ENCODE measurements at regions of chr1 and their contacts with region 1.

Region 1: GRCh38 chr1:51898071-51898734 is 19.7 kb upstream of the NRDC start:
- DNase-seq: no peak
- H3K4me3 ChIP-seq: no peak overlapping the region
- H3K27ac ChIP-seq: peak overlapping the region; percentile 36; the same call in 1 of the 2 replicates
- H3K4me1 ChIP-seq: peaks cover 22% of the 10 kb centered on the region
- H3K27me3 ChIP-seq: no peaks in the 10 kb centered on the region
- CTCF ChIP-seq: no peak

Region 2: DNA sequence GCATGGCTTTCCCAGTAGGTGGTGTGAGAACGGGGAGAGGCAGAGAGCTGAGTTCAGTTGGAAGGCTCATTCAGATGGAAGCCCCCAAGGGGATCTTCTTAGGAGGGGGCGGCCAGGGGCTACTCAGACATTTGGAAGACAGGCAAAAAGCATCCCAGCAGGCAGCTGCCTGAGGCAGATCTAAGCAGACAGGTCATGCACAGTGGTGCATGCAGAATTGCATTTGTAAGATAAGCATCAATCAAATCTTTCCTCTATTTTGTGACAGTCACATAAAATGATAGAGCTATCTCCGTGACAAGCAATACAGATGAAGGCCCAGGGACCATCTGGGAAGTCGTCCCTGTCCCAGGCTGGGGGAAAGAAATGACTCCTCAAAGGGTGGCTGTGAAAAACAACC is 88.5 kb after region 1 on chr1:
- CTCF ChIA-PET with region 1: interaction called, 17 read pairs
- POLR2A ChIA-PET with region 1: interaction called, 9 read pairs
- intact Hi-C with region 1: no loop called
- DNase-seq: no peak
- H3K4me3 ChIP-seq: no peak overlapping the region
- H3K27ac ChIP-seq: no peak overlapping the region
- H3K4me1 ChIP-seq: no peaks in the 10 kb centered on the region
- H3K27me3 ChIP-seq: no peaks in the 10 kb centered on the region
- CTCF ChIP-seq: no peak

Region 3: DNA sequence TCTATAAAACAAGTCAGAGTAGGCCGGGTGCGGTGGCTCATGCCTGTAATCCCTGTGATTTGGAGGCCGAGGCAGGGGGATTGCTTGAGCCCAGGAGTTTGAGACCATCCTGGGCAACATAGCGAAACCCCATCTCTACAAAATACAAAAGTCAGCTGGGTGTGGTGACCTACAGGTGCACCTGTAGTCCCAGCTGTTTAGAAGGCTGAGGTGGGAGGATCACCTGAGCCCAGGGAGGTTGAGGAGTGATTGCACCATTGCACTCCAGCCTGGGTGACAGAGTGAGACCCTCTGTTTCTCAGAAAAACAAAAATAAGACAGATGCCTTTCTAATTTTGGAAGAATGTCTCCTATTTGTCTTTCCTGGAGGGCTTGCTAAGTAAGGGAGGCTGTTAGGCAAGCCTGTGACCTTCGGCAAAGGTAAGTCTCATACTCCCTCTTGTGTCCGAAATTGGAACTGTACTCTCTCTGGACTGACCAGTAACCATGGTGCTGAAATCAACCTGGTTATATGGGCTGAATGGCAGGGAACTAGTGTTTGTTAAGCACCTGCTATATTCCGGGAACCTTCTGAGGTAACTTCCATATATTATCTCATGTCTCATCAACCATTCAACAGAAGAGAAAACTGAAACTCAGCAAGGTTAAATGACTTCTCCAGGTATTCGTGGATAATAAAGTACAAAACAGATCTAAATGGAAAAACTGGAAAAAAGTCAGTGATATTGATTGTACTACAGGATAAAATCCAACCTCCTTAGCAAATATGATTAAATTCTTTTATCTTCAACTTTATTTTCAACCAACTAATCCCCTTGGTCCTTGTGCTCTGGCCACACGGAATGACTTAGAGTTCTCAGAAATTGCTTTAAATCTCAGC is 104.1 kb after region 1 on chr1:
- CTCF ChIA-PET with region 1: no interaction called
- POLR2A ChIA-PET with region 1: no interaction called
- intact Hi-C with region 1: loop called (anchors 1 kb)
- DNase-seq: peak; percentile 67
- H3K4me3 ChIP-seq: no peak overlapping the region
- H3K27ac ChIP-seq: no peak overlapping the region
- H3K4me1 ChIP-seq: no peaks in the 10 kb centered on the region
- H3K27me3 ChIP-seq: no peaks in the 10 kb centered on the region
- CTCF ChIP-seq: peak; percentile 94

Region 4: DNA sequence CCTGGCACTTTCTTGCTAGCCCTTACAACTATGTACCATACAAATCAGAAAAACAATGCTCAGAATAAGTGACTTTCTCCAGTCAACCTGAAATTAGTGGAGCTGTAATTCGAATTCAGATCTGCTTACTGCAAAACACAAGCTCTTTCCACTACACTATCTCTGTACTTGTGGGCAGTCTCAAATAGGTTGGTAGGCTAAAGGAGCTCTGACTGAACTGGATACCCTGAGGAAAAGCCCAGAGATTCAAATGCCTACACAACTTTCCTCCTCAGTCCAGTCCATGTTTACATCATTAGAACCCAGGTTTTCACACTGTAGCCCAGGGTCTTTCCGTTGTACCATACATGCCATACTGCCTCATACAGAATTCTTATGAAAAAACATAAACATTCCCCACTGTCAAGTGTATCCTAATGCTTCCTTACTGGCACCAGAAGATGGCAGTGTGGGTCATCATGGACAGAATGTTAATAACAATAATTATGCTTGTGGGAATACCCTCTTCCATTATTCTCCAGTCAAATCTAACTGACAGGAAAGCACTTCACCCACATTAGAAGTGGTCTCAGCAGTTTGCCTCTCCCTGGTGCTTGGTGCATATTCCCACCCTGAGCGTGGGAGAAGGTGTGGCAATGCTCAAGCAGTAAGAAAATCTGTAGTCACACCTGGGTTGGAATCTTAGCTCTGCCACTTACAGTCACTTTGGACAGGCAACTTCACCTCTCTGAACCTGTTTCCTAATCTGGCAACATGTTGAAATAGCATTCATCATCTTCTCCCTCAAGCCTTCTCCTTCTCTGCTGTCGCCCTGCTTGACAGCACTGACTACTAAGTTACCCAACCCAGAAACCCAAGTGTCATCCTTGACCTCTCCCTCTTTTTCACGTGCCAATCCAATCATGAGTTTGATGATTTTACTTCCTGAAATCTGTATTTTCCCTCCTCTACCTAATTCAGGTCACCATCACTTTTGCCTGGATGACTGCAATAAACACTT is 229.3 kb after region 1 on chr1:
- CTCF ChIA-PET with region 1: no interaction called
- POLR2A ChIA-PET with region 1: no interaction called
- intact Hi-C with region 1: loop called (anchors 5 kb)
- DNase-seq: peak; percentile 32 to 50
- H3K4me3 ChIP-seq: no peak overlapping the region
- H3K27ac ChIP-seq: no peak overlapping the region
- H3K4me1 ChIP-seq: no peaks in the 10 kb centered on the region
- H3K27me3 ChIP-seq: no peaks in the 10 kb centered on the region
- CTCF ChIP-seq: peak; percentile 76

Region 5: GRCh38 chr1:52159033-52159789 is 261.0 kb after region 1 on chr1:
- CTCF ChIA-PET with region 1: interaction called, 17 read pairs
- POLR2A ChIA-PET with region 1: no interaction called
- intact Hi-C with region 1: no loop called
- DNase-seq: peak; percentile 43 to 55
- H3K4me3 ChIP-seq: no peak overlapping the region
- H3K27ac ChIP-seq: 0 out of 2 replicates have a peak overlapping the region, but pooled peaks have one; percentile 5
- H3K4me1 ChIP-seq: peaks cover 9% of the 10 kb centered on the region
- H3K27me3 ChIP-seq: no peaks in the 10 kb centered on the region
- CTCF ChIP-seq: no peak

Region 6: DNA sequence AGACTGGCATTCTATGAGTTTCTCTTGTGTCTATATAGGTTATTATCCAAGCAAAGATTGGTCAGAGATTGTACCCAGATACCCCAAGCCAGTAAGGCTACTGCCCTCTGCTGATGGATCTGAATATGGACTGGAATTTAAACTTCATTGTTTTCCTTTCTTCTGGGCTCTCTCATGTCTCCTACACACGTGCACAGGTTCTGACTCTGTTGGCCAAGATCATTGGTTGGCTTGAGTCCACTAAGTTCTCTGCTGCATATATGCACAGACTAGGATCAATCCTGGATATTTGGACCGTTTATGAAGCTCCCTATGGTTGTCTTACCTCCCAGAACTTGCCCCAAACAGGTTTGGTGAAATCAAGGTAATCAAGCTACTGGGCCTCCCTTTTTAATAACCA is 398.1 kb after region 1 on chr1:
- CTCF ChIA-PET with region 1: no interaction called
- POLR2A ChIA-PET with region 1: no interaction called
- intact Hi-C with region 1: loop called (anchors 5 kb)
- DNase-seq: peak; percentile 3 to 57
- H3K4me3 ChIP-seq: no peak overlapping the region
- H3K27ac ChIP-seq: no peak overlapping the region
- H3K4me1 ChIP-seq: no peaks in the 10 kb centered on the region
- H3K27me3 ChIP-seq: no peaks in the 10 kb centered on the region
- CTCF ChIP-seq: peak; percentile 79

Region 7: DNA sequence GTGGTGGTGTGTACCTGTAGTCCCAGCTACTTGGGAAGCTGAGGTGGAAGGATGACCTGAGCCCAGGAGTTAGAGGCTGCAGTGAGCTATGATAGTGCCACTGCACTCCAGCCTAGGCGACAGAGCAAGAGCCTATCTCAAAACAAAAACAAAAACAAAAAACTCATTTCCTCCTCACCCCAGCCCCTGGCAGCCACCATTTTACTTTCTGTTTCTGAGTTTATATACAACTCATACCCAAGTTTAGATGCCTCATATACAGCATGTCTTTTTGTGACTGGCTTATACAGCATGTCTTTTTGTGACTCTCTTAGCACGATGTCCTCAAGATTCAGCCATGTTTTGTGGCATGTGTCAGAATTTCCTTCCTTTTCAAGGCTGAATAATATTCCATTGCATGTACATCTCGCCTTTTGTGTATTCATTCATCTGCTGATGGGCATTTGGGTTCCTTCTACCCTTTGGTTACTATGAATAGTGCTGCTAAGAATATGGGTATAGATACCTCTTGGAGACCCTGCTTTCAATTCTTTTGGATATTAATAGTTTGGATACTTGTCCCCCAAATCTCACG is 785.3 kb after region 1 on chr1:
- CTCF ChIA-PET with region 1: no interaction called
- POLR2A ChIA-PET with region 1: no interaction called
- intact Hi-C with region 1: loop called (anchors 10 kb)
- DNase-seq: no peak
- H3K4me3 ChIP-seq: no peak overlapping the region
- H3K27ac ChIP-seq: no peak overlapping the region
- H3K4me1 ChIP-seq: no peaks in the 10 kb centered on the region
- H3K27me3 ChIP-seq: no peaks in the 10 kb centered on the region
- CTCF ChIP-seq: no peak

Measured in PC-9 (cell line).